Naive thymus-derived CD4-positive, alpha-beta T cell (primary cell): ENCODE measurements at regions of chr10 and their contacts with region 1.

Region 1: GRCh38 chr10:98134431-98135221 is at the start of gene R3HCC1L:
- DNase-seq: peak; percentile 87 to 95 (median 93)
- ATAC-seq: peak; percentile 98
- H3K4me3 ChIP-seq: peak within 1 kb of the TSS; percentile 91
- H3K4me3 Mint-ChIP-seq: peak within 1 kb of the TSS; percentile 78 to 95 (median 86)
- H3K27ac ChIP-seq: peak within 1 kb of the TSS; percentile 96
- H3K27ac Mint-ChIP-seq: peak within 1 kb of the TSS; percentile 71 to 98 (median 96)
- H3K4me1 ChIP-seq: peaks cover 23 to 27% of the 10 kb centered on the region in 2 donors
- H3K4me1 Mint-ChIP-seq: peaks cover 0 to 53% (median 44%) of the 10 kb centered on the region in 7 donors
- H3K27me3 ChIP-seq: no peaks in the 10 kb centered on the region
- H3K27me3 Mint-ChIP-seq: peaks cover 0 to 2% (median 0%) of the 10 kb centered on the region in 5 donors
- total RNA-seq, gene R3HCC1L: 17.6 to 25.3 (median 20.4) TPM

Region 2: DNA sequence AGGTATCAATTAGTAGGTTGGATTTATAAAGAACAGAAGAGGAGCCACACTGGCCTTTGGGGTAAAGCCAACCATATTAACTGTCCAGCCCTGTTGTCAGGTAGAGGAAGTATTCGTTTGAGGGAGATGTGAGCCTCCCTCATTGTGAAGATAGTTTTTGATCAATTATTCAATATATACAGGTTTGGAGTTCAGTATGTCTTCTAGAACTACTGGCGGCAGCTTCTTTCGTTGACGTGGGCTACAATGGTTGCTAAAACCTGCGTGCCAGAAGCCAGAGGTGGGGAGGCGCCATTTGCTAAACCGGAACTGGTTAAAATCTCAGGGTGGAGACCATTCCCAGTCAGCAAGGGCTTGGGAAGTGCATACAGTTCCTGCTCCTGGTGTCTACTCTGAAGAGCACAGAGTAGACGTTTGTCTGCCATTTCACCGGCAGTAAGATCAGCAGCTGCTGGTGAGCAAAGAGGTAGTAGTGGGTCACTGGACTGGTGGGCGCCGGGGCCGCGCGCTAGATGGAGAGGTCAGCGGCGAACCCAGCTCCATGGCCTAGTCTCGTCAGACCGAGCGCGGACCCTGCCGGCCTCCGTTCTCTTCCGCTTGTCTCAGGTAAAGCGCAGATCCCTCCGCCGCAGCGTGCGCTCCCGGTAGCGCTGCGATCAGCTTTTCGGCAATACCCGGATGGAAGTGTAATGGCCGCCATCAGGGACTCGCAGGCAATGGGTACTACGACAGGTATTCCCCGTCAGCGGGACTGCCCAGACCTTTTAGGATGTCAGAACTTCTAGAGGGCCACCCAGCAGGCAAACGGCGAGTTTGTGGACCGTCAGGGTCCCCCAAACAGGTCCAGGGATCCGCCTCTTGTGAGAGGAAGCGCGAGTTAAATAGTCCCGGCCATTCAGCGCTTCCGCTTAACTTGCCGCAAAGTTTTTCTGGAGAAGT is 2005.0 kb before region 1 on chr10 and contains the start of gene ZNF518A:
- CTCF ChIA-PET with region 1: no interaction called
- POLR2A ChIA-PET with region 1: no interaction called
- intact Hi-C with region 1: loop called in 1 of 2 experiments (anchors 10 kb)
- DNase-seq: peak; percentile 86 to 96 (median 94)
- ATAC-seq: peak; percentile 90
- H3K4me3 ChIP-seq: peak within 1 kb of the TSS; percentile 88
- H3K4me3 Mint-ChIP-seq: peak within 1 kb of the TSS; percentile 79 to 98 (median 94)
- H3K27ac ChIP-seq: peak within 1 kb of the TSS; percentile 97
- H3K27ac Mint-ChIP-seq: peak within 1 kb of the TSS; percentile 97 to 100 (median 99)
- H3K4me1 ChIP-seq: peaks cover 6 to 20% of the 10 kb centered on the region in 2 donors
- H3K4me1 Mint-ChIP-seq: peaks cover 7 to 35% (median 32%) of the 10 kb centered on the region in 7 donors
- H3K27me3 ChIP-seq: peaks cover 0 to 8% of the 10 kb centered on the region in 2 donors
- H3K27me3 Mint-ChIP-seq: peaks cover 30 to 46% (median 39%) of the 10 kb centered on the region in 5 donors
- total RNA-seq, gene ZNF518A: 17.6 to 25.1 (median 21.5) TPM

Region 3: GRCh38 chr10:97686962-97687784 is 447.5 kb before region 1 on chr10 and contains the start of gene AVPI1:
- CTCF ChIA-PET with region 1: no interaction called
- POLR2A ChIA-PET with region 1: no interaction called
- intact Hi-C with region 1: loop called (anchors 1 to 5 kb)
- DNase-seq: peak; percentile 94 to 97 (median 96)
- ATAC-seq: peak; percentile 97
- H3K4me3 ChIP-seq: peak within 1 kb of the TSS; percentile 80
- H3K4me3 Mint-ChIP-seq: peak within 1 kb of the TSS; percentile 85 to 90 (median 88)
- H3K27ac ChIP-seq: peak within 1 kb of the TSS; percentile 81
- H3K27ac Mint-ChIP-seq: peak within 1 kb of the TSS; percentile 28 to 96 (median 91)
- H3K4me1 ChIP-seq: peaks cover 5 to 25% of the 10 kb centered on the region in 2 donors
- H3K4me1 Mint-ChIP-seq: peaks cover 9 to 30% (median 19%) of the 10 kb centered on the region in 7 donors
- H3K27me3 ChIP-seq: no peaks in the 10 kb centered on the region
- H3K27me3 Mint-ChIP-seq: peaks cover 0 to 2% (median 0%) of the 10 kb centered on the region in 5 donors
- total RNA-seq, gene AVPI1: 0.65 to 10.6 (median 2.5) TPM

Region 4: DNA sequence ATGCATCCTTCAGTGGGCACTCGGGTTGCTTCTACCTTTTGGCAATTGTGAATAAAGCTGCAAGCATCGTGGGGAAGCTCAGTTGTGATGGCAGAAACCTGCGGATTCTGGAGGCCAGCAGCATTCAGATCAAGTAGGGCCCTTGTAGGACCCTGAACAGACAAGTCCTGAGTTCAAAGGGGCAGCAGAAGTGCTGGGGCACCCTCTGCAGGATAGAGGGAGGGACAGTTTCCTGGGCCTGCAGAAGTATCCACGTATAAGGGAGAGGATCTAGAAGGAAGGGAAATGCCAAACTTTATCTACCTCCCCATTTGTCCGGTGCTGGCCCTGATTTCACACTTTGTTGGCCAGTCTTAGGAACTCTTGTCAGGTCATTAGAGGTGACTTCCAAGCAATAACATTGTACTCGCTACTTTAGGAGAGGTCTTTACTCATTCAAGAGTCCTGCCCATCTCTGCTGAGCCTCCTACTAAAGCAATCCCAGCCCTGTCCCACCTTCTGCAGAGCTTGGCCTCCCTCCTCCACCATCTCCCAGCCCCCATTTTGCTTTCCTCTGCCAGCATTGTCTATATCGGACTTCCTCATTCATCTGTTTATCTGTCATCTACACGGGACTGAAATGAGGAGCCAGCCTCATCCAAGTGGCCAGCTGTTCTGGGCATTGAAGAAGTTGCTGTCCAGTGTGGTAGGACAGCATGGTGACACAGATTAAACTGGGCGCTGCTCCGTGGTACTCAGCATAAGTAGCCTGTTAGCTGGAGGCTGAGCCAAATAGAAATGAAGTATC is 26.8 kb before region 1 on chr10:
- CTCF ChIA-PET with region 1: no interaction called
- POLR2A ChIA-PET with region 1: no interaction called
- intact Hi-C with region 1: no loop called
- DNase-seq: no peak
- ATAC-seq: no peak
- H3K4me3 ChIP-seq: no peak overlapping the region
- H3K4me3 Mint-ChIP-seq: no peak overlapping the region
- H3K27ac ChIP-seq: no peak overlapping the region
- H3K27ac Mint-ChIP-seq: no peak overlapping the region
- H3K4me1 ChIP-seq: no peaks in the 10 kb centered on the region
- H3K4me1 Mint-ChIP-seq: no peaks in the 10 kb centered on the region
- H3K27me3 ChIP-seq: no peaks in the 10 kb centered on the region
- H3K27me3 Mint-ChIP-seq: peaks cover 8 to 35% (median 29%) of the 10 kb centered on the region in 5 donors

Region 5: DNA sequence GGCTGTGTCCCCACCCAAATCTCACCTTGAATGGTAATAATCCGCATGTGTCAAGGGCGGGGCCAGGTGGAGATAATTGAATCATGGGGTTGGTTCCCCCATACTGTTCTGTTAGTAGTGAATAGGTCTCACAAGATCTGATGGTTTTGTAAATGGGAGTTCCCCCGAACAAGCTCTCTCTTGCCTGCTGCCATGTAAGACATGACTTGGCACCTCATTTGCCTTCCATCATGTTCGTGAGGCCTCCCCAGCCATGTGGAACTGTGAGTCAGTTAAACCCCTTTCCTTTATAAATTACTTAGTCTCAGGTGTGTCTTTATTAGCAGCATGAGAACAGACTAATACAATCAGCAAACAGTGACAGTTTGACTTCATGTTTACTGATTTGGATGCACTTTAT is 14.7 kb before region 1 on chr10:
- CTCF ChIA-PET with region 1: no interaction called
- POLR2A ChIA-PET with region 1: no interaction called
- intact Hi-C with region 1: no loop called
- DNase-seq: no peak
- ATAC-seq: no peak
- H3K4me3 ChIP-seq: no peak overlapping the region
- H3K4me3 Mint-ChIP-seq: no peak overlapping the region
- H3K27ac ChIP-seq: no peak overlapping the region
- H3K27ac Mint-ChIP-seq: no peak overlapping the region
- H3K4me1 ChIP-seq: no peaks in the 10 kb centered on the region
- H3K4me1 Mint-ChIP-seq: no peaks in the 10 kb centered on the region
- H3K27me3 ChIP-seq: peaks cover 0 to 4% of the 10 kb centered on the region in 2 donors
- H3K27me3 Mint-ChIP-seq: peaks cover 40 to 56% (median 42%) of the 10 kb centered on the region in 5 donors

Region 6: DNA sequence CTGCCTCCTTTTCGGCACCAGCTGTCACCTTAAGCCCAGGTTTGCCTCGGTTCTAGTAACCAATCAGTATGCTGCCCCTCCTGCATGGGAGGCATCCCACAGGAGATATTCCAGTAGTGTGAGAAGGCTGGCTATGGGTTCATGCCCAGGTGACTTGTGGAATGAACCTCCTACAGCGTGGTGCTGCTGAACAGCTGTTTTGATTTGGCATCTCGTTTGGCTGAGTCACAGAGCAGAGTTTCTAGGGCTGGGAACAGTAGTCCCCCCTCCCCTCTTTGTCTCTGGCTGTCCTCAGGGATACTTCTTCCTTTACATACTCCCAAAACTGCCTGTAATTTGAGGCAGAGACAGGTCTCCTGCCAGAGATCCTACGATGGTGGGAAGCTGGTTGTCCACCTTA is 15.9 kb after region 1 on chr10:
- CTCF ChIA-PET with region 1: no interaction called
- POLR2A ChIA-PET with region 1: interaction called, 3 read pairs
- intact Hi-C with region 1: loop called in 1 of 2 experiments (anchors 1 kb)
- DNase-seq: no peak
- ATAC-seq: no peak
- H3K4me3 ChIP-seq: no peak overlapping the region
- H3K4me3 Mint-ChIP-seq: peak overlapping the region in 1 of 10 donors; percentile 15
- H3K27ac ChIP-seq: no peak overlapping the region
- H3K27ac Mint-ChIP-seq: peak overlapping the region in 1 of 9 donors; percentile 10
- H3K4me1 ChIP-seq: no peaks in the 10 kb centered on the region
- H3K4me1 Mint-ChIP-seq: peaks cover 6 to 61% (median 51%) of the 10 kb centered on the region in 7 donors
- H3K27me3 ChIP-seq: no peaks in the 10 kb centered on the region
- H3K27me3 Mint-ChIP-seq: no peaks in the 10 kb centered on the region

Region 7: GRCh38 chr10:99430451-99431189 is 1296.0 kb after region 1 on chr10 and contains the start of gene GOT1:
- CTCF ChIA-PET with region 1: no interaction called
- POLR2A ChIA-PET with region 1: no interaction called
- intact Hi-C with region 1: loop called in 1 of 2 experiments (anchors 2 kb)
- DNase-seq: peak; percentile 72 to 95 (median 94)
- ATAC-seq: peak; percentile 97
- H3K4me3 ChIP-seq: peak within 1 kb of the TSS; percentile 81
- H3K4me3 Mint-ChIP-seq: peak within 1 kb of the TSS; percentile 94 to 100 (median 98)
- H3K27ac ChIP-seq: peak within 1 kb of the TSS; percentile 90
- H3K27ac Mint-ChIP-seq: peak within 1 kb of the TSS; percentile 88 to 97 (median 94)
- H3K4me1 ChIP-seq: peaks cover 5 to 9% of the 10 kb centered on the region in 2 donors
- H3K4me1 Mint-ChIP-seq: peaks cover 19 to 53% (median 44%) of the 10 kb centered on the region in 7 donors
- H3K27me3 ChIP-seq: no peaks in the 10 kb centered on the region
- H3K27me3 Mint-ChIP-seq: no peaks in the 10 kb centered on the region
- total RNA-seq, gene GOT1: 8.0 to 22.2 (median 10.2) TPM

Region 8: DNA sequence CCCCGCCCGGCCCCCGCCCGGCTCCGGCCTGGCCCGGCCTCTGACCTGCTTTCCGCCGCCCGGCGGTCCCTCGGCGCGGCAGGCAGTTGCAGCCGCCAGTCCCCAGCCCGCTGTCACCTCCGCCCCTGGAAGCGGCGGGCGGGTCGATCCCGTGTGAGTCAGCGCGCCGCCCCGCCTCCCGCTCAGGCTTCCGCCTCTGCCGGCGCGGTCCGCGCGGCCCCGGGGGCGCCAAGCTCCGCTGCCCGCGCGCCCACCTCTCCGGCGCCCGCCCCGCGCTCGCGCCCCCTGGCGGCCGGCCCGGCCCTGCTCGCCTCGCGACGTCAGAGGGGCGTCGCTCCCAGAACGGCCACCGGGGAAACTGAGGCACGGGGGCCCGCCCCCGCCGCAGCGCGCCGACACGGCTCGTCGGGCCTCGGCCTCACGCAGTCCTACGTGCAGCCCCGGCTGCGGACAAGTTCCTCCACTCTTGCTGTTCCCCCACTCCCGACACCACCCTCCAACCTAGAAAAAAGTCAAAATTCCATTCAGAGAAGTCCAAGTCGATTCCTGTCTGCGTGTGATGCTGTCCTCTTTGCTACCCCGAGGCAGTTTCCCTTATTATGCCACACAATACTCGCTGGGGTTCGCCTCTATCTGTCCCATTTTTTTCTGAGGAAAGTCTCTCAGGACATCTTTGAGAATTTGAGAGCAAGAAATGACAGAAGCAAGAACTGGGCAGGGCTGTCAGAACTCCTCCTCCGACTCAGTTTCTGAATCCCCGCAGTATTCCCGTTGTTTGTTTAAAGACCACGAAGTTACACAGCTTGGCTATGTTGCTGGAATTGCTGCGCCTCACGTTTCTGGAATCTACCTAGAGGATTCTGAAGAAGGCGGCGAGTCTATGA is 1875.4 kb after region 1 on chr10 and contains the start of gene DNMBP:
- CTCF ChIA-PET with region 1: no interaction called
- POLR2A ChIA-PET with region 1: no interaction called
- intact Hi-C with region 1: loop called in 1 of 2 experiments (anchors 1 kb)
- DNase-seq: peak; percentile 61 to 87 (median 79)
- ATAC-seq: peak; percentile 95
- H3K4me3 ChIP-seq: peak within 1 kb of the TSS; percentile 69
- H3K4me3 Mint-ChIP-seq: peak within 1 kb of the TSS; percentile 85 to 98 (median 96)
- H3K27ac ChIP-seq: peak within 1 kb of the TSS; percentile 50
- H3K27ac Mint-ChIP-seq: peak within 1 kb of the TSS; percentile 40 to 96 (median 82)
- H3K4me1 ChIP-seq: peaks cover 10 to 12% of the 10 kb centered on the region in 2 donors
- H3K4me1 Mint-ChIP-seq: peaks cover 8 to 51% (median 40%) of the 10 kb centered on the region in 7 donors
- H3K27me3 ChIP-seq: no peaks in the 10 kb centered on the region
- H3K27me3 Mint-ChIP-seq: peaks cover 0 to 35% (median 0%) of the 10 kb centered on the region in 5 donors
- total RNA-seq, gene DNMBP: 2.8 to 8.5 (median 4.4) TPM